ENCODE measurements at regions of chr19 and their contacts with region 1.

Region 1: GRCh38 chr19:56314562-56315077 is at the start of gene ZSCAN5A:
- DNase-seq: peak; percentile 90 to 97
- H3K4me3 ChIP-seq: peak within 1 kb of the TSS; percentile 77
- H3K27ac ChIP-seq: peak within 1 kb of the TSS; percentile 88
- H3K4me1 ChIP-seq: peaks cover 15% of the 10 kb centered on the region
- H3K27me3 ChIP-seq: peaks cover 2% of the 10 kb centered on the region; the same call in 1 of the 2 replicates
- CTCF ChIP-seq: no peak
- total RNA-seq, gene ZSCAN5A: 20.5 and 23.6 TPM in 2 replicates

Region 2: GRCh38 chr19:54928299-54928698 is 1386.3 kb before region 1 on chr19:
- CTCF ChIA-PET with region 1: interaction called, 10 read pairs
- POLR2A ChIA-PET with region 1: no interaction called
- intact Hi-C with region 1: no loop called
- DNase-seq: no peak
- H3K4me3 ChIP-seq: no peak overlapping the region
- H3K27ac ChIP-seq: no peak overlapping the region
- H3K4me1 ChIP-seq: no peaks in the 10 kb centered on the region
- H3K27me3 ChIP-seq: peaks cover 14% of the 10 kb centered on the region; the same call in 1 of the 2 replicates
- CTCF ChIP-seq: no peak

Region 3: GRCh38 chr19:56090931-56091490 is 223.6 kb before region 1 on chr19:
- CTCF ChIA-PET with region 1: no interaction called
- POLR2A ChIA-PET with region 1: no interaction called
- intact Hi-C with region 1: loop called (anchors 1 kb)
- DNase-seq: peak; percentile 83 to 99
- H3K4me3 ChIP-seq: peak overlapping the region; percentile 64
- H3K27ac ChIP-seq: peak overlapping the region; percentile 100
- H3K4me1 ChIP-seq: peaks cover 39% of the 10 kb centered on the region
- H3K27me3 ChIP-seq: no peaks in the 10 kb centered on the region
- CTCF ChIP-seq: no peak

Region 4: DNA sequence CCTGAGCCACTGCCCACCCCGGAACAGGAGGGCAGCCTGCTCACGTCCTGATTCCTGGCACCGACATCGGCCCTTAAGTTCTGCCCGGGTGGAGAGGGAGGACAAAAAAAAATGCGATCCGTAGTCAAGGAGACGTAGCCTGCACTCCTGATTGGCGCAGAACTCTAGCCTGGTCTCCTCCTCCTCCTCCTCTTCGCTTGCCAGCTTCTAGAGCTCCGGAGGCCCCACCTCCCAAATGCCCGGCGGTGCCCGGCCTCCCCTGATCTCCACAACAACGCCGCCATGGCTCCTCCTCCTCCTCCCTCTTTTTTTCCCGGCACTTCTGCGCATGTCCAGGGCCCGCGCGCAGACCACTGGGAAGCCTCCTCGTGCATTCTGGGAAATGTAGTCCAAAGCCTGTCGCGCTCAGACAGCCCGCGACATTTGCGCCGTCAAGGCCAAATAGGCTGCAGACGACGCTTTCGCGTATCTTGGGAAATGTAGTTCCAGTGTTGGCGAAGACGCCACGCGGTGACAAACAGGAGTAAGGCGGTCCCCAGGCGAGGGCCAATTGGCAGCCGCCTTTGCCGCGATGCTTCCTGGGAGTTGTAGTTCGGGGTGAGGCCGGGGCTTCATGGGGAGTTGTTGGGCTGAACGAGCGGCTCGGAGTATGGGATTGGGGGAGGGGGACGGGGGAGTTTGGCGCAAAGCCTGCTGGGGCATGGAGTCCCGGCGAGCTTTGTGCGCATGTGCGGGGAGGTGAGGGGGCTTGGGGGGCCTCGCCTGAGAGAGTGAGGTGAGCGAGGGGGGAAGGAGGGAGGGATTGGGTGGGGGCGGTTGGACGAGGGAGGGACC is 173.8 kb before region 1 on chr19 and contains the start of gene ZNF444:
- CTCF ChIA-PET with region 1: no interaction called
- POLR2A ChIA-PET with region 1: no interaction called
- intact Hi-C with region 1: loop called (anchors 2 kb)
- DNase-seq: peak; percentile 98 to 100
- H3K4me3 ChIP-seq: peak within 1 kb of the TSS; percentile 60
- H3K27ac ChIP-seq: peak within 1 kb of the TSS; percentile 61
- H3K4me1 ChIP-seq: peaks cover 36% of the 10 kb centered on the region
- H3K27me3 ChIP-seq: no peaks in the 10 kb centered on the region
- CTCF ChIP-seq: no peak
- total RNA-seq, gene ZNF444: 50.5 and 74.2 TPM in 2 replicates

Region 5: DNA sequence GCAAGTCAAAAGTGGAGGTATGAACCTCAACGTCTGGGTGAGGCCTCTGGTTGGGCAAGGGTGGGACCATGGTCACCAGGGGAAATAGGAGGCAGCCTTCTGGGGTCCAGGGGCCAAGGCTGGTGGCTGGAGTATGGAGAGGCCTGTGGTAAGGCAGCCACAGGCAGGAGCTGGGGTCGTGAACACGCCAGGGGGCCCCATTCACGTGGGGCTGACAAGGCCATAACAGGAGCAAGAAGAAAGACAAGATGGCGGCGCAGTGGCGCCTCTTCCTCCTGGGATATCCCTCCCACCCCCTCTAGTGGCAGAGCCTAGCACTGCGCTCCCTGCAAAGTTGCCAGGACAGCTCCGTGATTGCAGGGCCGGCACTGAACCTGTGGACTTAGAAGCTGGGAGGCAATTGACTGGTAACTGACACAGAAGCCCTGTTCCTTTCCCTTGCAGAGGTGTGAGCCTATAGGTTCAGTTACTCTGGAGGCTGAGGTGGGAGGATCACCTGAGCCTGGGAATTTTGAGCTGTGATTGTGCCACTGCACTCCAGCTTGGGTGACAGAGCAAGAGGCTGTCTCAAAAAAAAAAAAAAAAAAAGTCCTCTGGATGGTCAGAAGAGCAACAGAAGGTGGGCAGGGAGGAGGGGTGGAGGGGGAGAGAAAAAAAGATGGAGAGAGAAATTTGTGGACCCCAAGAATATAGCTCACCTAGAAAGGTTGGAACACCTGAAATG is 61.8 kb before region 1 on chr19:
- CTCF ChIA-PET with region 1: interaction called, 26 read pairs
- POLR2A ChIA-PET with region 1: no interaction called
- intact Hi-C with region 1: no loop called
- DNase-seq: peak; percentile 56 to 82
- H3K4me3 ChIP-seq: no peak overlapping the region
- H3K27ac ChIP-seq: no peak overlapping the region
- H3K4me1 ChIP-seq: no peaks in the 10 kb centered on the region
- H3K27me3 ChIP-seq: no peaks in the 10 kb centered on the region
- CTCF ChIP-seq: peak; percentile 89

Region 6: DNA sequence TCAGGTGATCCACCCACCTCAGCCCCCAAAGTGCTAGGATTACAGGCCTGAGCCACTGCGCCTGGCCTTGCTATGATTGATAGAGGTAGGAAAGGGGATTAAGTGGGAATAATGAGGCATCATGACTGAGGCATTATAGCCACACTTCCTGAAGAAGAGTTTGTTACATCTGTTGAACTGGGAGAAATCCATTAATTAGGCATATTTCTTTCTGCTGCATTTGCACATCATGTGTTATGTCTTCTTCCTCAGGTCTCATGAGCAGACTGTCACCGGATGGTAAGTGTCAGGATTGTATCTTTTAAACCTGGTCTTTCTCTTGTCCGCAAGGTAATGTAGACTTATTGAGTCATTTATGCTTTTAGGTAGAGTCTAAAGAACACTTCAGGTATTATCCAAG is 29.9 kb before region 1 on chr19:
- CTCF ChIA-PET with region 1: no interaction called
- POLR2A ChIA-PET with region 1: no interaction called
- intact Hi-C with region 1: no loop called
- DNase-seq: no peak
- H3K4me3 ChIP-seq: no peak overlapping the region
- H3K27ac ChIP-seq: no peak overlapping the region
- H3K4me1 ChIP-seq: no peaks in the 10 kb centered on the region
- H3K27me3 ChIP-seq: no peaks in the 10 kb centered on the region
- CTCF ChIP-seq: no peak

Region 7: DNA sequence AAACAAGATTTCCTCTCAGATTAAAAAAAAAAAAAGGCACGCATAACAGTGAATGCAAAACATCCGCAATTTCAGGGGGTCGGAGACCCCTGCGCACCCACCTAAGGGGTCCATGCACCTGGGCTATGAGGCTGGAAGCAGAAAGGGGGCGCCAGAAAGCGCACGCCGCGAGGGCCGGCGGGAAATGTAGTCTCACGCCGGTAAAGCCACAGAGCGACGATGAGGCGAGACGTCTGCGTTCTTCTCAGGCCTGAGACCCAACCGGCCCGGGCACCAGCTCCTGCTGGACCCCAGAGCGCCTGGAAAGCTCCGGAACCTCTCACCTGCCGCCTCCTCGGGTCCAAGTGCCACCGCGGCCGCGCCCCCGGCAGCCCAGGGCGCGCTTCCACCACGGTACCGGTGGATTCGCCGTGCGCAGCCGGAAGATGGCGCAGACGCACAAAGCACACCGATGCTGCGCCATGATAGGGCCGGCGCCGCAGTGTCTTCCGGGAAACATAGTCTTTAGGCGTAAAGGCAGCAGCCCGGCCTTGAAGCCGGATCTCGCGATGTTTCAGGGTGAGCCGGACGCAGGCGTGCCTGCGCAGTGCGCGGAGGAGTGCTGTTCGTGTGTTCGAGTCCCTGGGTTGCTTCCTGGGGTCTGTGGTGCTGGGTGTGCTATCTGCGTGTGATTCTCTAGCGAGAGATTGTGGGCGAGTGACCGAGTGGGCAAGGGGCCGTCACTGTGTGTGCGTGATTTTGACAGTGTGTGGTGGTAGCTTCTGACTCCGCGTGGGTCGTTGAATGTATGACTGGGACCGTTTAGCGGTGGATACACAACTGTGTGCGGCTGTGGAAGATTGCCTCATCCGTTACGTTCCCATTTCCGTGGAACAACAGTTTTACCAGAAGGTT is 78.7 kb after region 1 on chr19 and contains the start of gene ZNF582:
- CTCF ChIA-PET with region 1: no interaction called
- POLR2A ChIA-PET with region 1: no interaction called
- intact Hi-C with region 1: loop called (anchors 2 kb)
- DNase-seq: peak; percentile 86 to 89
- H3K4me3 ChIP-seq: peak within 1 kb of the TSS; percentile 70
- H3K27ac ChIP-seq: peak within 1 kb of the TSS; percentile 50
- H3K4me1 ChIP-seq: 0 out of 2 replicates have a peak, but pooled peaks cover 9% of the 10 kb centered on the region
- H3K27me3 ChIP-seq: no peaks in the 10 kb centered on the region
- CTCF ChIP-seq: peak; percentile 89
- total RNA-seq, gene ZNF582: 1.8 and 3.4 TPM in 2 replicates

Measured in PC-9 (cell line).